GM12878 (cell line): ENCODE measurements at regions of chr7 and their contacts with region 1.

Region 1: DNA sequence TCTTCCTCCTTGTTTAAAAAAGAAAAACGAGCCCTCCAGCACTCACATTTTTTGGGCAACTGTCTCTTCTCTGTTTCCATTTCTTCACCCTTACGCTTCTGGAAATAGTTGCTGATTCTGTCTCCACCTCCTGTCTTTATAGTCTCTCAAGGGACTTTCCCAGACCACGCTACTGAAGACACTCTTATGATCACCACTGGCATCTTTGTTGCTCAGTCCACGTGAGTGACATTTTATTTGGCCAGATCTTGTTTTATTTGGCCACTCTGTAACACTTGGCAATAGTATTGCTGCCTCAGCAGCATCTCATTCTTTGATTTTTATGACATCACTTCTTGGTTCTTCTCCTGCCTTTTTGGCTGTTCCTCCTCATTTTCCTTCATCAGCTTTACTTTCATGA is 21.6 kb upstream of the NME8 start:
- DNase-seq: no peak
- ATAC-seq: peak; percentile 83
- H3K4me3 ChIP-seq: 0 out of 2 replicates have a peak overlapping the region, but pooled peaks have one; percentile 2
- H3K27ac ChIP-seq: no peak overlapping the region
- H3K4me1 ChIP-seq: peaks cover 7% of the 10 kb centered on the region; the same call in 1 of the 2 replicates
- H3K27me3 ChIP-seq: no peaks in the 10 kb centered on the region
- CTCF ChIP-seq: no peak
- EP300 ChIP-seq: no peak
- POLR2A ChIP-seq: no peak
- RAD21 ChIP-seq: no peak

Region 2: DNA sequence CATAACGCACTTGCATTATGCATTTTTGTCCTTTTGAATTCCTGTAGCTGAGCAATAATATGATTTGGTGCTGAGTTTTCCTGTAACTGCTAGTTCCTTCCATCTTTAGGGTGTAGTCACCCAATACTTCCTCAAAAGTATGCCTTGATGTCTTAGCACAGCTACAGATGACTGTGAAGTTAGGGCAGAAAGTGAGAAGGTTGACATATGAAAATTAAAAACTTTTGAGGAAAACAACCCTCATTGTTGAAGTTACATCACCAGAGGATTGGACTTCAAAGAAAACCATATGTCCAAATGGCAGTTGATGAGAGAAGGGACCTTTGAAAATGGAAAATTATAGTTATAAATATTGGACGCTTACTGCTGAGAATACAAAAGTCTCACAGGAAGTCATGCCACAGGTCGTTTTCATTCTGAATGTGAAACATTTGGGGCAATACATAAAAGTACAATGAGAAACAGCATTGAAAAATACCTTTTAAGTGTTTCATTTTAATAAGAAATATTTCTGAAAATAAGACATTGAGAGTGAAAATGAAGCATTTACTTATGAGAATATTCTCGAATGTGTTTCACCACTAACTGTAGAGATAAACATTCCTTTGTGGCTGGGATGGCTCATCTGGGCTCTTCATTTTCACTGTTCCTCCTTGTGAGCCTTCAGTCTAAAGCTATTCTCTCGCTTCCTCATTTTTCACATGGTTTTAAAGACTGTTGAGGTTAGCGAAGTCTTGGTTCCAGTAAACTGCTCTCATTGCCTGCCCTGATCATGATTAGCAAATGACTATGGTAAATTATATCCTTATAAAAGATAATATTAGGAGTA is 39.9 kb before region 1 on chr7:
- CTCF ChIA-PET with region 1: interaction called, 26 read pairs
- POLR2A ChIA-PET with region 1: interaction called, 5 read pairs
- RAD21 ChIA-PET with region 1: interaction called, 17 read pairs
- SMC1A ChIA-PET with region 1: interaction called, 193 read pairs
- in situ Hi-C with region 1: no loop called
- intact Hi-C with region 1: no loop called
- DNase-seq: peak; percentile 91
- ATAC-seq: peak; percentile 92
- H3K4me3 ChIP-seq: peak overlapping the region; percentile 25; the same call in 1 of the 2 replicates
- H3K27ac ChIP-seq: peak overlapping the region; percentile 86
- H3K4me1 ChIP-seq: peaks cover 50% of the 10 kb centered on the region
- H3K27me3 ChIP-seq: no peaks in the 10 kb centered on the region
- CTCF ChIP-seq: no peak
- EP300 ChIP-seq: peak; percentile 83 to 89; a peak in 3 of 4 replicates
- POLR2A ChIP-seq: no peak
- RAD21 ChIP-seq: no peak